ENCODE measurements at regions of chr6 and their contacts with region 1.

Region 1: DNA sequence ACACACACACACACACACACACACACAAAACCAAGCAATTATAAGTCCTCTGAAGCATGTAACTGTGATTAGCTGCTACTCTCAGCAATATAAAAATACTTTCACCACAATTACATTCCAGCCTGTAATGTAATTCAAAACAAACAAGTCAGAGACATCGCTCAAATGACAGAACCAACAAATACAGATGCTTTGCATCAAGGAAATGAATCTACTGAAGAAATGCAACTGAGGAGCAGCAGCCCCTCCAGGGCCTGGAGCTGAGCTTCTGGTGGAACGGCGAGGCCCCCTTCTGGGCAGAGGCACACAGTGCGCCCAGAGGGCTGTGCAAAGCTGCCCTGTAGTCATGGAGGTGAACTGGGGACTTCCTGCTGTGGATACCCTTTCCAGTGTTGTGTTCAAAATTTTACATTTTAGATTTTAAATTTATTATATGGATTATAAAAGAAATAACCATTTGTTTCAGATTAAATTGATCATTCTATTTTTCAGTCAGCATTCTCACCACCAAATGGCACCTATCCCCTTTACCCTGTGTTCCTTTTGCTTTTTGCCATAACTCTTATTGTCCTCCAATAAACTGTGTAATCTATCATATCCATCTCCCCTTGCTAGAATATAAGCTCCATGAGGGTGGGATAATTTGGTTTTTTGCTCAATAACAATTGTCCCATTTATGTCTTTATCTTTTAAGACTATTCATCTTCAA is 23.2 kb downstream of the ADAT2 start:
- DNase-seq: peak; percentile 82
- ATAC-seq: peak; percentile 99
- H3K4me3 ChIP-seq: no peak overlapping the region
- H3K27ac ChIP-seq: peak overlapping the region; percentile 31
- H3K4me1 ChIP-seq: peaks cover 6% of the 10 kb centered on the region
- H3K27me3 ChIP-seq: no peaks in the 10 kb centered on the region
- CTCF ChIP-seq: peak; percentile 93

Region 2: GRCh38 chr6:142474531-142475289 is 952.6 kb before region 1 on chr6:
- CTCF ChIA-PET with region 1: interaction called, 5 read pairs
- POLR2A ChIA-PET with region 1: no interaction called
- intact Hi-C with region 1: loop called (anchors 1 kb)
- DNase-seq: peak; percentile 78
- ATAC-seq: peak; percentile 97
- H3K4me3 ChIP-seq: peak overlapping the region; percentile 48; the same call in 1 of the 2 replicates
- H3K27ac ChIP-seq: 0 out of 2 replicates have a peak overlapping the region, but pooled peaks have one; percentile 2
- H3K4me1 ChIP-seq: no peaks in the 10 kb centered on the region
- H3K27me3 ChIP-seq: no peaks in the 10 kb centered on the region
- CTCF ChIP-seq: peak; percentile 78

Region 3: DNA sequence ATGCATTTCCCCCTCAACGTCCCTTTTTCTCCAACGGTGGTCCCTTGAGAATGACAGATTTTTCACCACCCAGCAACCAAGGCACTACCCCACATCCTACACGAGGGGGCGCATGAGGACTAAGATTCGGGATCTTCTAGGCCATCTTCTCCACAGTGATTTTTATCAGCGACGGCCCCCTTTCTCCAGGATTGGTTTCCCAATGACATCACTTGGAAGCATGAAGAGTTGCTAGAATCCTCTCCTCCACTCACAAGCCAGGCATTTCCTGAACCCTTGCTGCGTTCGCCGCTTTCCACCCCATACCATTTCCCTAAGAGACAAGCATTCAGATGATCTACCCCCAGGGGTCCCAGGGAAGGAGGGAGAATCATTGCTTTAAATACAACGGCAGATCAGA is 734.3 kb before region 1 on chr6:
- CTCF ChIA-PET with region 1: interaction called, 3 read pairs
- POLR2A ChIA-PET with region 1: interaction called, 19 read pairs
- intact Hi-C with region 1: loop called (anchors 1 kb)
- DNase-seq: peak; percentile 65
- ATAC-seq: peak; percentile 25
- H3K4me3 ChIP-seq: no peak overlapping the region
- H3K27ac ChIP-seq: peak overlapping the region; percentile 42
- H3K4me1 ChIP-seq: peaks cover 32% of the 10 kb centered on the region
- H3K27me3 ChIP-seq: no peaks in the 10 kb centered on the region
- CTCF ChIP-seq: peak; percentile 88

Region 4: DNA sequence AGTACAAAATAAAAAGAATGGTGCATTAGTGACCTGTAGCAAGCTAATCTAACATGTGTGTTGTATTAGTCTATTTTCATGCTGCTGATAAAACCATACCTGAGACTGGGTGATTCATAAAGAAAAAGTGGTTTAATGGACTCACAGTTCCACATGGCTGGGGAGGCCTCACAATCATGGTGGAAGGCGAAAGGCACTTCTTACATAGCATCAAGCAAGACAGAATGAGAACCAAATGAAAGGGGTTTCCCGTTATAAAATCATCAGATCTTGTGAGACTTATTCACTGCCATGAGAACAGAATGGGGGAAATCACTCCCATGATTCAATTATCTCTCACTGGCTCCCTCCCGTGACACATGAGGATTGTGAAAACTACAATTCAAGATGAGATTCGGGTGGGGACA is 412.0 kb before region 1 on chr6:
- CTCF ChIA-PET with region 1: no interaction called
- POLR2A ChIA-PET with region 1: no interaction called
- intact Hi-C with region 1: loop called (anchors 10 kb)
- DNase-seq: no peak
- ATAC-seq: no peak
- H3K4me3 ChIP-seq: no peak overlapping the region
- H3K27ac ChIP-seq: peak overlapping the region; percentile 98
- H3K4me1 ChIP-seq: peaks cover 26% of the 10 kb centered on the region
- H3K27me3 ChIP-seq: no peaks in the 10 kb centered on the region
- CTCF ChIP-seq: no peak

Region 5: DNA sequence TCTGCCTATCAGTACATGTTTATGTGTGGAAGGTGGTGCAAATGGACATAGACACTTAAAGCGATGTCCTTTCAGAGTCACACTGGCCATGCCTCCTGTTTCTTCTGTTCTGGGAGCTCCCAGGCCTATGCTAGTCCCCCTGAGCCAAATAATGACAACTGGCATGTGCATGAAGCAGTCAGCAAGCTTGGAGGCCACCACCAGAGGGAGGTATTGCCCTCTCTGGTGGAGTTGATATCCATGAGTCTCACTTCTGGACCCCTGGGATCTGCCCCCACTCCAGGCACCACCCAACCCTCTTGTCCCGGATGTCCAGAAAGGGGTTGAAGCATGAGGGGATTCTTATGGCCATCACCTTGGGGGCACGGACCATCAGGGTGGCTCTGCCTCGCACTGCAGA is 194.4 kb before region 1 on chr6:
- CTCF ChIA-PET with region 1: no interaction called
- POLR2A ChIA-PET with region 1: no interaction called
- intact Hi-C with region 1: loop called (anchors 1 kb)
- DNase-seq: peak; percentile 66
- ATAC-seq: no peak
- H3K4me3 ChIP-seq: no peak overlapping the region
- H3K27ac ChIP-seq: 0 out of 2 replicates have a peak overlapping the region, but pooled peaks have one; percentile 11
- H3K4me1 ChIP-seq: peaks cover 20% of the 10 kb centered on the region
- H3K27me3 ChIP-seq: no peaks in the 10 kb centered on the region
- CTCF ChIP-seq: peak; percentile 87

Region 6: GRCh38 chr6:143337201-143337949 is 89.9 kb before region 1 on chr6:
- CTCF ChIA-PET with region 1: no interaction called
- POLR2A ChIA-PET with region 1: no interaction called
- intact Hi-C with region 1: loop called (anchors 5 kb)
- DNase-seq: peak; percentile 37
- ATAC-seq: no peak
- H3K4me3 ChIP-seq: no peak overlapping the region
- H3K27ac ChIP-seq: peak overlapping the region; percentile 100
- H3K4me1 ChIP-seq: peaks cover 61% of the 10 kb centered on the region
- H3K27me3 ChIP-seq: no peaks in the 10 kb centered on the region
- CTCF ChIP-seq: peak; percentile 62

Measured in PC-3 (cell line).